MCF 10A (cell line): ENCODE measurements at regions of chr14 and their contacts with region 1.

Region 1: DNA sequence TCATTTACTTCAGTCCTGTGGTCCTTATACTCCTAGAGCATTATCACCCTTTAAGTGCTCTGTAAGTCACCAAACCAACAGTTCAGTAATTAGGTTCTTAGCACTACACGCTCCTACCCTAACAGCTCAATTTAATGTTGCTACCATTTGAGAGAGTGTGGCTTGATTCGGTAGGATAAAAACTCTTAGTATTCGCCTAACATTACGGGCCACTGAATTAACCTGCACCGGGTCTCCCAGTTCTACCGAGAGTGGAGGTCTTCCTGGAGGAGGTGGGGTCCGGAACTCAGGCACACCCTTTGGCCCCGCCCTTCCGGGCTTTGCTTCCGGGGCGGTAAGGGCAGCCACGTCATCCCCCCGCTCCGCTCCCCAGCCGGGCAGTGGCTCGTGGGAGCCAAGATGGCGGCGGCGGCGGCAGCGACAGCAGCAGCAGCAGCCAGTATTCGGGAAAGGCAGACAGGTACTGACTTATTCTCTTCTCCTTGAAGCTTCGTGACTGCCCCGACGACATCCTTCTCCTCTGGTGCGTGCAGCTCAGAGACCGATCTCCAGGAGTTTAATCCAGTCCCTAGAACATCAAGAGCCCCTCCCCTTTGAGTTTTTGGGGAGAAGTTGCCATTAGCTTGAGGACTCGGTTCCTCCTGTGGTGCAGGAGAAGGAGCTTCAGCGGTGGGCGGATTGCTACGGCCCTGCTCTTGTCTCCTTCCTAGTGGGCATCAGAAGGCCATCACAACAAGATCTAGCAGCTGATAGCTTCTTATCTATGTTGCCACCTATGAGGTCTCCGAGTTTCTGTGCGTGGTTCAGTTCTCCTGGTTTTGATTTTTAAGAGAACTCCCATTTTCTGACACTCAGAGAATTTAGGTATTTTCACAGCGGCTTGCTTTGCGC is at the start of gene SCFD1:
- DNase-seq: peak; percentile 90
- H3K4me3 Mint-ChIP-seq: peak within 1 kb of the TSS; percentile 98
- H3K27ac Mint-ChIP-seq: peak within 1 kb of the TSS; percentile 99
- H3K4me1 Mint-ChIP-seq: peaks cover 24% of the 10 kb centered on the region
- H3K27me3 Mint-ChIP-seq: no peaks in the 10 kb centered on the region
- CTCF ChIP-seq: no peak
- total RNA-seq, gene SCFD1: 113 and 126 TPM in 2 replicates

Region 2: GRCh38 chr14:30558675-30559555 is 63.3 kb before region 1 on chr14 and contains the start of gene G2E3:
- CTCF ChIA-PET with region 1: no interaction called
- POLR2A ChIA-PET with region 1: interaction called, 46 read pairs
- intact Hi-C with region 1: no loop called
- DNase-seq: peak; percentile 91
- H3K4me3 Mint-ChIP-seq: peak within 1 kb of the TSS; percentile 98
- H3K27ac Mint-ChIP-seq: peak within 1 kb of the TSS; percentile 99
- H3K4me1 Mint-ChIP-seq: peaks cover 14% of the 10 kb centered on the region
- H3K27me3 Mint-ChIP-seq: no peaks in the 10 kb centered on the region
- CTCF ChIP-seq: no peak
- total RNA-seq, gene G2E3: 34.1 and 34.7 TPM in 2 replicates

Region 3: DNA sequence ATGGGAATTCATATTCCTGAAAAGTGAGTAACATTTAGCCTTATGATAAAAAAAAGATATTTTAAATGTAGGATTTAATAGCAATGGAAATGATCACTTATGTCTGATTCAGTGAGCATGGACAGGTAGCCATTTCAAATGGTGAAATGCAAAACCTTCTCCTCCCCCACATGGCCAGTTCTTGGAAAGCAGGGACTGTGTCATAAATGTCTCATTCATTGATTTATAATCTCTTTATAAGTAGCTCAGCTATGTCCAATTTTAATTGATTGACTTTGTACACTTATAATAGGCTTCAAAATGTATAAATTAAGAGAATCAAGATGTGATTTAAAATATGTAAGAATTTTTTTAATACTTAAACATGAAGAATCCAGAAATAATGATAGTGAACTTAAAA is 24.7 kb before region 1 on chr14:
- CTCF ChIA-PET with region 1: interaction called, 5 read pairs
- POLR2A ChIA-PET with region 1: interaction called, 17 read pairs
- intact Hi-C with region 1: no loop called
- DNase-seq: no peak
- H3K4me3 Mint-ChIP-seq: no peak overlapping the region
- H3K27ac Mint-ChIP-seq: no peak overlapping the region
- H3K4me1 Mint-ChIP-seq: no peaks in the 10 kb centered on the region
- H3K27me3 Mint-ChIP-seq: no peaks in the 10 kb centered on the region
- CTCF ChIP-seq: no peak

Region 4: DNA sequence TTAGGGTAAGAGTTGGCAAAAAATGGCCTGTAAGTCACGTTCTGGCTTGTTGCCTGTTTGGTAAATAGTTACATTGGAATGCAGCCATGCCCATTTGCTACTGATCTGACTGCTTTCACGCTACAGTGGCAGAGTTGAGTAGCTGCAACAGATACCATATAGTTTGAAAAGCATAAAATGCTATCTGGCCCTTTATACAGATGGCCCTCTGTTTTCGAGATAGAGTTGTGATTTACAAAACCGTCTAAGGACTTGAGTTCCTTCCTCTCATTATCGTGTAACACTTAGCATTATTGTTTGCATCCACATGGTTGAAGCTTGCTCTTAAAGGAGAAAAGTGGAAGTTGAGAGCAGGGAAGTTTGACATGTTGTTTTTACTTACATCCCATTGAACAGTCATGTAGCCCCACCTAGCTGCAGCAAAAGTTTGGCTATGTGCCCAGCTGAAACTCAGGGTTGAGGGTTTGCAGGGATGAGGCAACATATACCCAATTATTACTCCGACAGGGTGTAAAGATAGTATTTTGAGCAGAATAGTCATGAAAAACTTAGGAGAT is 11.3 kb before region 1 on chr14:
- CTCF ChIA-PET with region 1: interaction called, 35 read pairs
- POLR2A ChIA-PET with region 1: interaction called, 138 read pairs
- intact Hi-C with region 1: no loop called
- DNase-seq: peak; percentile 89
- H3K4me3 Mint-ChIP-seq: peak overlapping the region; percentile 69
- H3K27ac Mint-ChIP-seq: peak overlapping the region; percentile 69
- H3K4me1 Mint-ChIP-seq: peaks cover 30% of the 10 kb centered on the region
- H3K27me3 Mint-ChIP-seq: no peaks in the 10 kb centered on the region
- CTCF ChIP-seq: peak; percentile 18

Region 5: GRCh38 chr14:30638926-30639325 is 16.7 kb after region 1 on chr14:
- CTCF ChIA-PET with region 1: no interaction called
- POLR2A ChIA-PET with region 1: interaction called, 35 read pairs
- intact Hi-C with region 1: no loop called
- DNase-seq: peak; percentile 49
- H3K4me3 Mint-ChIP-seq: no peak overlapping the region
- H3K27ac Mint-ChIP-seq: peak overlapping the region; percentile 25
- H3K4me1 Mint-ChIP-seq: peaks cover 10% of the 10 kb centered on the region
- H3K27me3 Mint-ChIP-seq: no peaks in the 10 kb centered on the region
- CTCF ChIP-seq: no peak

Region 6: DNA sequence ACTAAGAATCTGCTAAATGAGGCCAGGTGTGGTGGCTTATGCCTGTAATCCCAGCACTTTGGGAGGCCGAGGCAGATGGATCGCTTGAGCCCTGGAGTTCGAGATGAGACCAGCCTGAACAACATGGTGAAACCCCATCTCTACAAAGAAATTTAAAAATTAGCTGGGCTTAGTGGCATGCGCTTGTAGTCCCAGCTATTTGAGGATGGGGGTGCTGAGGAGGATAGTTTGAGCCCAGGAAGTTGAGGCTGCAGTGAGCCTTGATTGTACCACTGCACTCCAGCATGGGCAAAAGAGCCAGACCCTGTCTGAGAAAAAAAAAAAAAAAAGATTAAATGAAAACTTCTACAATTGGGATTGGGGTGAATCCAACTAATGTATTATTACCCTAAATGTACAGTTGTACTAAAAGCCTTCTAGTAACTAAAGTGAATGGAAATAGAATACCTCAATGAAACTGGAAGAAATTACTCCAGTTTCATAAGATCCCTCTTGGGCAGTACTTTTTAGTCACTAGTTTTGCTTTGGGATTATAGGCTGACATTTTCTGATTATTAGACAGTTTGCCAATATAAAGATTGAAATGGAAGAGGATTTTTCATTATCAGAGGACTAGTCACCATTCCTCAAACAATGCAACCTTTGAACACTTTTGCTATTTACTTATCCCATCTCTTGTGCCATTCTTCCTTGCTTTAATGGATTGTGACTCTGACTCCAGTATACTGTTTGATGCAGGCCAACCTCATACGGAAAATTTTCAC is 266.5 kb after region 1 on chr14:
- CTCF ChIA-PET with region 1: no interaction called
- POLR2A ChIA-PET with region 1: no interaction called
- intact Hi-C with region 1: no loop called
- DNase-seq: no peak
- H3K4me3 Mint-ChIP-seq: no peak overlapping the region
- H3K27ac Mint-ChIP-seq: no peak overlapping the region
- H3K4me1 Mint-ChIP-seq: no peaks in the 10 kb centered on the region
- H3K27me3 Mint-ChIP-seq: no peaks in the 10 kb centered on the region
- CTCF ChIP-seq: no peak